ENCODE measurements at regions of chr5 and their contacts with region 1.

Region 1: GRCh38 chr5:179559284-179560252 is 9.2 kb downstream of the RUFY1 start:
- DNase-seq: peak; percentile 99
- H3K4me3 ChIP-seq: peak overlapping the region; percentile 40 to 52
- H3K27ac ChIP-seq: peak overlapping the region; percentile 79 to 83
- H3K4me1 ChIP-seq: no peaks in the 10 kb centered on the region
- H3K27me3 ChIP-seq: no peaks in the 10 kb centered on the region
- CTCF ChIP-seq: no peak
- POLR2A ChIP-seq: peak; percentile 93

Region 2: DNA sequence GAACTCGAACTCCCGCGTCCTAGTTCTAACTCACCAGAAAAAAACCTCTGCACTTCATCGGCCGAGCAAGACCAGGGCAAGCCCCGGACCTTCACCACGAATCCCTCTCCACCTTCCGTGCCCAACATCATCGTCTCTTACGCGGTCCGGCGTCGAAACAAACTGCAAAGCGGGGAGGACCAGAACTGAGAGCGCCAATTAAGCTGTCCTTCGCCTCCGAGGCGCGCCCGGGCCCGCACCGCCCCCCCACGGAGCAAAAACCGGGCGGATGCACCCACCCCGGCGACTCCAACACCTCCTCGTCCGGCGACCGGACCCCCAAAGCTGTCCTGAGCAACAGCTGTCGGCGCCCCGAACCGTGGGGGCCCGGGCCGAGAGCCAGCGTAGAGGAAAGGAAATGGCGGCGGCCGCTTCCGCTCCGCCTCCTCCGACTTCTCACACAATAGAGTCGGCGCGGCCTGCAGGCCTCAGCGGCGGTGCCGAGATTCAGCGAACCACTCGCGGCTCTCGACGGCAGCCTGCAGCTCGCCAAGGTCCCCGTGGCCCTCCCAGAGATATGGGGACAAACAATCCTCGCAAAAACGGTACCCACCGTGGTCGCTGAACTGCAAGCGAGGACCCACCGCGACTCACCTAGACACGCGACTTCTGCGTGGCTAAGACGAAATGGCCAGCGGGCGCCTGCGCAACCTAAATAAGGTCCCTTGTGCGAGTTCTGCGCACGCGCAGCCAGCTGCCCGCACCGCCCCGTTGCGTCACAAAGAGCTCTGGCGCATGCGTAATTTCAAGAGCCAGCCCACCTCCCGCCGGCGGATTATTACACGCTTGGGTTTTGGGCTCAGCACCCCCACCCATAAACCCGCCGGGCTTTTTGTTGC is 63.7 kb after region 1 on chr5 and contains the start of gene HNRNPH1:
- intact Hi-C with region 1: loop called (anchors 2 kb)
- DNase-seq: no peak
- H3K4me3 ChIP-seq: peak within 1 kb of the TSS; percentile 99 to 100
- H3K27ac ChIP-seq: peak within 1 kb of the TSS; percentile 100
- H3K4me1 ChIP-seq: peaks cover 13% of the 10 kb centered on the region
- H3K27me3 ChIP-seq: no peaks in the 10 kb centered on the region
- CTCF ChIP-seq: peak in 1 of 4 experiments; percentile 6
- POLR2A ChIP-seq: peak; percentile 99
- total RNA-seq, gene HNRNPH1: 260 to 398 TPM